ENCODE measurements at regions of chr3 and their contacts with region 1.

Region 1: GRCh38 chr3:108662130-108662738 is 72.7 kb downstream of the DZIP3 start:
- DNase-seq: peak in 2 of 4 donors; percentile 72 to 86
- ATAC-seq: peak; percentile 94
- H3K4me3 ChIP-seq: no peak overlapping the region
- H3K27ac ChIP-seq: no peak overlapping the region
- H3K4me1 ChIP-seq: no peaks in the 10 kb centered on the region
- H3K27me3 ChIP-seq: no peaks in the 10 kb centered on the region
- CTCF ChIP-seq: peak; percentile 55 to 73

Region 2: GRCh38 chr3:108472001-108472591 is 190.1 kb before region 1 on chr3:
- intact Hi-C with region 1: no loop called
- DNase-seq: no peak
- ATAC-seq: peak; percentile 36
- H3K4me3 ChIP-seq: no peak overlapping the region
- H3K27ac ChIP-seq: no peak overlapping the region
- H3K4me1 ChIP-seq: no peaks in the 10 kb centered on the region
- H3K27me3 ChIP-seq: no peaks in the 10 kb centered on the region
- CTCF ChIP-seq: no peak

Region 3: GRCh38 chr3:108589146-108589997 is 72.9 kb before region 1 on chr3 and contains the starts of genes CIP2A and DZIP3:
- intact Hi-C with region 1: no loop called
- DNase-seq: peak; percentile 87 to 95 (median 93)
- ATAC-seq: peak; percentile 95
- H3K4me3 ChIP-seq: peak within 1 kb of the TSS; percentile 63 to 80
- H3K27ac ChIP-seq: peak within 1 kb of the TSS; percentile 94
- H3K4me1 ChIP-seq: peaks cover 3 to 20% of the 10 kb centered on the region in 2 donors
- H3K27me3 ChIP-seq: no peaks in the 10 kb centered on the region
- CTCF ChIP-seq: no peak
- polyA plus RNA-seq, gene CIP2A: 14.0 to 26.1 (median 19.9) TPM
- polyA plus RNA-seq, gene DZIP3: 26.0 to 32.8 (median 29.7) TPM

Region 4: GRCh38 chr3:108780235-108780634 is 118.0 kb after region 1 on chr3:
- intact Hi-C with region 1: no loop called
- DNase-seq: peak in 1 of 4 donors; percentile 48
- ATAC-seq: no peak
- H3K4me3 ChIP-seq: no peak overlapping the region
- H3K27ac ChIP-seq: no peak overlapping the region
- H3K4me1 ChIP-seq: no peaks in the 10 kb centered on the region
- H3K27me3 ChIP-seq: no peaks in the 10 kb centered on the region
- CTCF ChIP-seq: no peak

Region 5: DNA sequence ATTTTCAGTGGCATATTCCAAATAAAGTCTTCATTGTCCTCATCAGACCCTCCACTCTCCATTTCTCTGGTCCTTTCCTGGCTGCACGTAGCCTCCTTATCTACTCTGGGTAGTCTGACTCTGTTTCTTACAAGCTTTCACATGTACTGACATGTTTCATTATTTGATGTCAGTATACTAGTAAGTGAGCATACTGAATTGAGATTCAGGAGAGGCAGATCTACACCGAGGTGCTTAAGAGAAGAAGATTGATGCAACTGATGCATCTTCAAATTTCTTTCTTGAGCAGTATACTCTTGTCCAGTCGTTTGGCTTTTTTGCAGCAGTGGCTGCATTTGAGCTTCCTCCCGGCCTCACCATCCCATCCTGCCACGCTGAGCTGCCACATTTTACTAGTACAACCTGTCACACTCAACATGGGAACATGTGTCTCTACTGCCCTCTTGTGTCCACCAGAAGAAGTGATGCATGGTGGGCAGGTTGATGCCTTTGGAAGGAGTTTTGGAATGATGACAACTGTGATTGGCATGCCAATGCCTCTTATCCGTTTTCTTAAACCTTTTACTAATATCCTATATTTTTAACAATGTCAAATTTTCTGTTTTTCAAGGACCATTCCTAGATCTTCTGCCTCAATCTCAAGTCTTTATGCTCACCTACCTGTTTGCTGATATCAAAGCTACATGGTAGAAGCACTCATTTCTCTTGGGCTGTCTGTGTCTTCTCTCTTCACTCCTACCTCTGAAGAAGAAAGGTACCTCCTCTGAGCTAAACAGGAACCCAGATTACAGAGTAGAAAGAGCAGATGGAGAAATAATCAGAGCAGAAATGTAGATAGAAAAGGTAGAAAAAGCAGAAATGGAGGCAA is 252.8 kb after region 1 on chr3:
- intact Hi-C with region 1: loop called in 1 of 2 experiments (anchors 10 kb)
- DNase-seq: peak in 3 of 4 donors; percentile 23 to 56 (median 37)
- ATAC-seq: peak; percentile 89
- H3K4me3 ChIP-seq: no peak overlapping the region
- H3K27ac ChIP-seq: no peak overlapping the region
- H3K4me1 ChIP-seq: no peaks in the 10 kb centered on the region
- H3K27me3 ChIP-seq: no peaks in the 10 kb centered on the region
- CTCF ChIP-seq: peak; percentile 72 to 77